Heart right ventricle (tissue), 16 donors: ENCODE measurements at regions of chr1 and their contacts with region 1.

Region 1: DNA sequence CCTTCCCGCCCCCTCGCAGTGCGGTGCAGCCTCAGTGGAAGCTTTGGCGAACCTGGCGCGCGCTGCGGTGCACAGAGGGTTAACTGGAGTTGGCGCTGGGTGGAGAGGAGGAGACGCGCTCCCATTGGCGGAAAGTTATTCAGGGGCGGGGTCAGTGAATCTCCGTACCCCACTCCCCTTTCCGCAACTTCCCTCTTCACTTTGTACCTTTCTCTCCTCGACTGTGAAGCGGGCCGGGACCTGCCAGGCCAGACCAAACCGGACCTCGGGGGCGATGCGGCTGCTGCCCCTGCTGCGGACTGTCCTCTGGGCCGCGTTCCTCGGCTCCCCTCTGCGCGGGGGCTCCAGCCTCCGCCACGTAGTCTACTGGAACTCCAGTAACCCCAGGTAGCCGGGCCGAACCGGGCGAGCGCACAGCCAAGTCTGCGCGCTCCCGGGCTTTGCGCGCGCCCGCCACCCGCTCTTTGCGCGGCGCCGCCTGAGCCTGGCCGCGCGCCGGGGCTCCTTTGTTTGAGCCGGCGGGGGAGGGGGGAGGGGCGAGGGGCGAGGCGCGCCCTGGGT is at the start of gene EFNA4:
- DNase-seq: peak; percentile 82 to 89
- ATAC-seq: peak; percentile 82 to 89 (median 87)
- H3K4me3 ChIP-seq: peak within 1 kb of the TSS; percentile 43 to 97 (median 84)
- H3K27ac ChIP-seq: peak within 1 kb of the TSS in 9 of 10 donors; percentile 23 to 91 (median 76)
- H3K4me1 ChIP-seq: peaks cover 16 to 47% (median 33%) of the 10 kb centered on the region in 9 donors
- H3K27me3 ChIP-seq: no peaks in the 10 kb centered on the region
- CTCF ChIP-seq: no peak
- total RNA-seq, gene EFNA4: 0.49 to 2.8 (median 1.8) TPM

Region 2: GRCh38 chr1:154847891-154848290 is 215.7 kb before region 1 on chr1:
- intact Hi-C with region 1: no loop called
- DNase-seq: peak in 1 of 2 donors; percentile 30
- ATAC-seq: peak in 1 of 8 donors; percentile 10
- H3K4me3 ChIP-seq: no peak overlapping the region
- H3K27ac ChIP-seq: no peak overlapping the region
- H3K4me1 ChIP-seq: peaks cover 8 to 47% (median 33%) of the 10 kb centered on the region in 9 donors
- H3K27me3 ChIP-seq: no peaks in the 10 kb centered on the region
- CTCF ChIP-seq: no peak

Region 3: DNA sequence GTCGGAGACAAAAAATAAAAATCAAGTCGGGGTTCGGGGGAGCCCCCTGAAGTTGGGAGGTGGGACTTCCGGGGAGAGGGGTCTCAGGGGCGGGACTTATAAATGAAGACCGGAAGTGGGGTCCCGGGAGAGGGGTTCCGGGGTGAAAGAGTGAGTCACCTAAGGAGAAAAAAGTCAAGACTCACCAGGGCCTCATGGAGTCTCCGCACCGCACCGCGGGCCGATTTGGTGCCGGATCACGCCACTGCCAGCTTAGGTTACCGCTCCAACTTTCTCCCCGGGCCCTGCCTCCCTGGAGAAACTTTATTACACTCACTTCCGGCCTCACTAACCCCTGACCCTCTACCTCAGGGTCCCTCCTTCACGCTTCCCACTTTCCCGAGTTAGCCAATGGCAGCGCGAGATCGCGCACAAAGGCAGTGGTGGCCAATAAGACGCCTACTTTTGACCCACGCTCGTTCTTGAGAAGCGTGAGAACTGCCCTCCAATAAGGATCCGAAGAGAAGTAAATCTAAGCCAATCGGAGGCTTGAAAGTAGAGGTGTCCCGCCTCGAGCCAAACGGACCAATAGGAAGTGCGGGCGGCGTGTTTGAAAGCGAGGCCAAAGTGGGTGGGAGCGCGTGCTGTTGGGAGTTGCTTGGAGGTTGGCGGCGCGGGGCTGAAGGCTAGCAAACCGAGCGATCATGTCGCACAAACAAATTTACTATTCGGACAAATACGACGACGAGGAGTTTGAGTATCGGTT is 89.4 kb before region 1 on chr1 and contains the start of gene CKS1B:
- intact Hi-C with region 1: loop called in 3 of 10 experiments (anchors 5 to 10 kb)
- DNase-seq: peak; percentile 95 to 98
- ATAC-seq: peak; percentile 82 to 92 (median 89)
- H3K4me3 ChIP-seq: peak within 1 kb of the TSS; percentile 41 to 89 (median 66)
- H3K27ac ChIP-seq: peak within 1 kb of the TSS; percentile 90 to 100 (median 96)
- H3K4me1 ChIP-seq: peaks cover 25 to 64% (median 50%) of the 10 kb centered on the region in 9 donors
- H3K27me3 ChIP-seq: no peaks in the 10 kb centered on the region
- CTCF ChIP-seq: peak in 1 of 9 donors; percentile 18
- total RNA-seq, gene CKS1B: 10.9 to 30.9 (median 17.5) TPM

Region 4: DNA sequence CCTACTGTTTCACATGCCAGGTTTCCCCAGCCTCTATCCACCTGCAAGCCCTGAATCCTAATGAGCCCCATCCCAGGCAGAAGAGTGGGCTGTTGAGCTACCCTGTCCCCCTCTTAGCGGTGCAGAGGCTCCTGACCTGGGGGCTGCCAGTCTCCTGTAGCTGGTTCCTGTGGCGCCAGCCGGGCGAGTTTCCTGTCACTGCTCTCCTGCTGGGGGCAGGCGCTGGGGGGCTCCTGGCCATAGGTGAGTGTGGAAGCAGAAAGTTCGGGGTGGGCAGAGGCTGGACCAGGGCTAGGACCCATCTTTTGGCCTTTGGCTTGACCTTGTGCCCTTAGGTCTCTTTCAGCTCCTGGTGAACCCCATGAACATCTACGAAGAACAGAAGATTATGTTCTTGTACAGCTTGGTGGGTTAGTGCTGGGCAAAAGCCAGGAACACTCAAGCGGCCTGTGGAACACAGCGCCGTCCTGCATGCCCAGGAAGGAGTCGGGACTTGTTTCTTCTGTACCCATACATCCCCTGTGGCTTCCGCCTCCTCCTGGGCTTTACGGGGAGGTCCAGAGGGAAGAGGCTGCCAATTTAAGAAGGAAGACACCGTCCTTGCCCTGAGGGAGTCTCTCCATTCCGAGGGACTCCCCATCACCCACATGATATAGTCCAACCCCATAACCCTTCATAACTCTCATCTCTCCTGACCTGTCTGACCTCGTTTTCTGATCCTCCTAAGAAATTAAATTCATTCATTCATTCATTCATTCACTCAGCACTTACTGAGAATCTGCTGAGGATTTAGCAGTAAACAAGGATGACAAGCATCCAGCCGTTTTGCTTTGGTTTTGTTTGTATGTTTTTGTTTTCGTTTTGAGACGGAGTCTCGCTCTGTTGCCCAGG is 29.1 kb before region 1 on chr1:
- intact Hi-C with region 1: no loop called
- DNase-seq: no peak
- ATAC-seq: no peak
- H3K4me3 ChIP-seq: no peak overlapping the region
- H3K27ac ChIP-seq: no peak overlapping the region
- H3K4me1 ChIP-seq: peaks cover 0 to 23% (median 2%) of the 10 kb centered on the region in 9 donors
- H3K27me3 ChIP-seq: no peaks in the 10 kb centered on the region
- CTCF ChIP-seq: no peak

Region 5: DNA sequence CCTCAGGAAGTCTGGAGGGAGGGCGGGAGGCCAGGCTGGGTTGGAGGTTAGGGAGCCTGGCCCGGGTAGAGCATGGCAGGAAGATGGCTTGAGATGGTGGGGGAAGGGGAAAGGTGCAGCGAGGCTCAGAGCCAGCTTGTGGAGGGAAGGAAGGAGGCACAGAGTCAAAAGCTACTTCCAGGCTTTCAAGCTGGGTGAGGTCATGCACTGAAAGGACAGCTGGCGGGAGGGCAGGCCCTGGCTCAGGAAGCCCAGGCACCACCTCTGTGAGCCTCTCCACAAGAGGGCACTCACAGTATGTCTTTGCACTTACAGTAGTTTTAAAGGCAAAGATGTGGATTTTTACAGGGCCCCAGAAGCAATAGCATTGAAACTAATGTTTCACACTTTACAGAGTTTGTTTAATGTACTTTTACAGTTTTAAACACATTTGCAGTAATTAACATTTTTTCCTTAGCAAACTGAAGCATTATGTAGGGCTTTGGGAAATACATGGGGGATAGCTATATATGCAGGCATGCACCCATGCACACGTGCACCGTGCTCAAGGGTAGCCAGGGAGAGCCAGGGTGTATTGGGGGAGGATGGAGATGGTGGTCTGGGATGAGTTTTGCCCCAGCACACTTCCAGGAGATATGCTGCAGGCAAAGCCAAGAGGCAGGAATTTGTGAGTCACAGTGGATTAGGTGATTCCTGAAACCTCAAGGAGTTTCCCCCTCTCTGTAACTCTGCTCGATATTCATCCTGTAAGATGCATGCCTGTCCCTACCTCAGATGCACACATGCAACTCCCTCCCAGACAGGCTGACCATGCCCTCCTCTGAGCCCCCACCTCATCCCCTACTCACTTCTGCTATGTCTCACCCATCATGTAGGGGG is 18.6 kb before region 1 on chr1:
- intact Hi-C with region 1: loop called in 2 of 10 experiments (anchors 1 to 2 kb)
- DNase-seq: peak; percentile 72 to 85
- ATAC-seq: peak; percentile 89 to 96 (median 93)
- H3K4me3 ChIP-seq: no peak overlapping the region
- H3K27ac ChIP-seq: peak overlapping the region in 7 of 10 donors; percentile 5 to 63 (median 48)
- H3K4me1 ChIP-seq: peaks cover 4 to 21% (median 16%) of the 10 kb centered on the region in 9 donors
- H3K27me3 ChIP-seq: no peaks in the 10 kb centered on the region
- CTCF ChIP-seq: peak; percentile 64 to 90 (median 80)

Region 6: GRCh38 chr1:155176544-155177071 is 113.0 kb after region 1 on chr1:
- intact Hi-C with region 1: no loop called
- DNase-seq: peak; percentile 79 to 84
- ATAC-seq: peak; percentile 36 to 50 (median 44)
- H3K4me3 ChIP-seq: no peak overlapping the region
- H3K27ac ChIP-seq: no peak overlapping the region
- H3K4me1 ChIP-seq: peaks cover 5 to 46% (median 24%) of the 10 kb centered on the region in 9 donors
- H3K27me3 ChIP-seq: peaks cover 7 to 28% (median 19%) of the 10 kb centered on the region in 7 donors
- CTCF ChIP-seq: peak; percentile 86 to 97 (median 93)